A549 (cell line): ENCODE measurements at regions of chr15 and their contacts with region 1.

Region 1: DNA sequence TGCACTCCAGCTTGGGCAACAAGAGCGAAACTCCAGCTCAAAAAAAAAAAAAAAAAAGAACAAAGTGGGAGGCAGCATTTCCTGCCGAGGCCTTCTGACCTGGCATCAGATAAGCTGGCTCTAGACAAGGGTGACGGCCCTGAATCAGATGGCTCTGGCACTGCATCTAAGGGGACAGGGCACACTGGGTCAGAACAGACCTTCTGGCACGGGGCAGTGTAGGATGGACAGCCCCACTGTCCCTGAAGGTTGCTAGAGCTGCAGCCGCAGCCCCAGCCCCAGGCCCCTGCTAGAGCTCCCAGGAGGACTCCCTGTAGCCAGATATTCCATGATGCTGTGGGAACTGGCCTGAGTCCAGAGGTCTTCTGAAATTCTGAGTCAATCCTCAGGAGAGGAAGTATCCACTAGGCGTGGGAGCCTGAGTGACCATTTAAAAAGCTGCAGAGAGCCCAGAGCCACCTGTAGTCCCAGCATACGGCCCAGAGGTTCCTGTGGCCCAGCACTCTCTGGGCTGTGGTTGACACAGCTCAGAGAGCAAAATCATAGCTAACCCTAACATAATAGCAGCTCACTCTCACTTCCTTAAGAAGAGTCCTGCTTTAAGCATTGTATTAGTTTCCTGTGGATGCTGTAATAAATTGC is 69.2 kb upstream of the MFGE8 start:
- DNase-seq: peak; percentile 72 to 86
- ATAC-seq: peak; percentile 78 to 89
- H3K4me3 ChIP-seq: no peak overlapping the region
- H3K27ac ChIP-seq: peak overlapping the region; percentile 87 to 89
- H3K4me1 ChIP-seq: peaks cover 57% of the 10 kb centered on the region
- CTCF ChIP-seq: no peak
- EP300 ChIP-seq: peak in 1 of 2 experiments; percentile 28; a peak in 2 of 5 replicates
- POLR2A ChIP-seq: no peak; the same call in none of the 2 replicates
- RAD21 ChIP-seq: no peak; a peak in 2 of 5 replicates

Region 2: DNA sequence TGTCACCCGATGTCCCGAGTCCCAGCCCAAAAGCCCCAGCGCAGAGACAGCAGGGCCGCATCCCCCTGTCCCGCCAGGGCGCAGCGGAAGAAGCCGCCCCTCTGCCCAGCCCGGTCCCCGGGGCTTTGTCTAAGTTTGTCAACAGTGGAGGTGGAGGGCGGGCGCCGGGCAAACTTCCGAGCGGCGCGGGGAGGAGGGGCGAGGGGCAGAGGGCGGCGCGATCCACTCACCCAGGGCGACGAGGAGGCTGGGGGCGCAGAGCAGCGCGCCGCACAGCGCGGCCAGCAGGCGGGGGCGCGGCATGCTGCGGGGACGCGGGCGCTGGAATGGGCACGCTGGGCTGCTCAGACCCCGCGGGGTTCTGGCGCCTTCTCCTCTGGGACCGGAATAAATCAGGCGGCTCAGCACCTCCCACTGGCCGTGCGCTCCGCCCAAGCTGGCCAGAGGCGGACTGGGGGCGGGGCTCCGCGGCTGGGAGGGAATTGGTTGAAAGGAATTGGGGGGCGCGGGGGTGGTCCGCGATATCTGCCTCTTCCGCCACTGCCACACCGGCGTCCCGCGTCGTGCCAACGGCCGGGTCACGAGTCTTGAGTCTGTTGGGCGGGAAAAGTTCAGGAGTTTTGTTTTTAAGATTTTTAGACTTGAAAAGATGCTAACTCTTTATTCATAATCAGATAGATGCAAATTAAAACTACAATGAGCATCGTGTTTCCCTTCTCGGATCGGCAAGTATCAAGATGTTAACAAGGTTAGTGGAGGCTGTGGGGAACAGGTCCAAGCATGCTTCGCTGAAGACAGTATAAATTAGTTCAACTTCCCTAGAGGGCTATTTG is 69.2 kb before region 1 on chr15 and contains the start of gene MFGE8:
- CTCF ChIA-PET with region 1: interaction called, 851 read pairs
- POLR2A ChIA-PET with region 1: interaction called, 40 read pairs
- DNase-seq: peak; percentile 77 to 87
- ATAC-seq: peak; percentile 84 to 90
- H3K4me3 ChIP-seq: peak within 1 kb of the TSS; percentile 66
- H3K27ac ChIP-seq: peak within 1 kb of the TSS; percentile 73 to 89
- H3K4me1 ChIP-seq: peaks cover 26% of the 10 kb centered on the region
- CTCF ChIP-seq: no peak
- EP300 ChIP-seq: no peak
- POLR2A ChIP-seq: peak; percentile 96
- RAD21 ChIP-seq: 0 out of 5 replicates have a peak, but pooled peaks of 1 of the 2 experiments have one; percentile 20
- polyA plus RNA-seq, gene MFGE8: 206 and 213 TPM in 2 replicates

Region 3: DNA sequence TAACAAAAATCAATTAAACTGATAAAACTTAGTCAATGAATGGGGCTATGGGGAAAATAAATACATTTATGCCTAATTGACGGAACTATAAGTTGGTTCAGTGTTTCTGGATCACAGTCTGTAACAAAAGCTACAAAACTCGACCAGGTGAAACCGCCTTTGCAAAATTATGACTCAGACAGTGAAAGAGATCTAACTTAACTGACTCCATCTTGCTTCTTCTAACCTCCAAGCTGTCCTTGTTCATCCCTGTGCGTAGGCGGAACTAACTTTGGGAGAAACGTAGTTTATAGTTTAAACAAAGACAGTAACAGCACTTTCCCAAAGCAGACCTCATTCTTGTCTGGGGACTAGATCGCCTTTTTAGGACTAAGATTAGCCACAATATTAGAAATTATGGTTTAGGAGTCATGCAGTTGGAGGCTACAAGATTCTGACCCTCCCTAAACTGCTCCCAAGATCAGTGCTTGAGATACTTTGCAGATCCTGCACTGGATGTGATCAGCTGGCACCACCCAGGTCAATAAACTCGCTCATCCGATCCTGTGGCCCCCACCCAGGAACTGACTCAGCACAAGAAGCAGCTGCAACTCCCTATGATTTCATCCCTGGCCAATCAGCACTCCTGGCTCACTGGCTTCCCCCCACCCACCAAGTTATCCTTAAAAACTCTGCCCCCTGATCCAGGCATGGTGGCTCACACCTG is 62.1 kb before region 1 on chr15:
- CTCF ChIA-PET with region 1: interaction called, 851 read pairs
- POLR2A ChIA-PET with region 1: interaction called, 15 read pairs
- DNase-seq: peak in 1 of 2 experiments; percentile 70
- ATAC-seq: peak in 1 of 2 experiments; percentile 60; a peak in 3 of 6 replicates
- H3K4me3 ChIP-seq: no peak overlapping the region
- H3K27ac ChIP-seq: peak overlapping the region; percentile 55 to 78
- H3K4me1 ChIP-seq: peaks cover 34% of the 10 kb centered on the region
- CTCF ChIP-seq: no peak
- EP300 ChIP-seq: no peak
- POLR2A ChIP-seq: no peak
- RAD21 ChIP-seq: no peak

Region 4: DNA sequence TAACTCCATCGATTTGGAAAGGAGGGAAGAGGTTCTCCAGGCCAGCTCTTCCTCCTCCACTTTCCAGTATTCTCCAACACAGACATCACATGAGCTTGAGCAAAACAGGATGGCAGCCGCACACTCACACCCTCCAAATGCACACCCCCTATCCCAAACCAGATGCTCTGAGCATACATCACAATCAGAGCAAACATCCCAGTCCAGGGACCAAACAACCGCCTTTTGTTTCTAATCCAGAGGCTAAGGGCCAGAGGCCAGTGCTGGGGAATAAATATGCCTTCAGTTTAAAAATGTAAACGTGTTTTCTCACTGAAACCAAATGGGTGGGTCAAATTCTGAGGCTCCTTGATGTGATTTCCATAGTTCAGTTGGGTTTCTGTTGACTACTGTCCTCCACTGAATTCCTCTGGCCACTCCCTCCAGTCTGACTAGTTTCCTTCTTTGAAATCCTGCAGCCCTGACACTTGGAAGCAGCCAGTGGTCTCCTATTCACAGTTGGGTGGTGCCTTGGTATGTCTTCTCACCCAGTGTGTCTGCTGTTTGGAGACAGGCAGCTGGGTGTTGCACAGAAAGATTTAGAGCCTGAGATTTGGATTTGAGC is 50.1 kb before region 1 on chr15:
- CTCF ChIA-PET with region 1: no interaction called
- POLR2A ChIA-PET with region 1: no interaction called
- DNase-seq: no peak
- ATAC-seq: peak in 1 of 2 experiments; percentile 51; a peak in 2 of 6 replicates
- H3K4me3 ChIP-seq: no peak overlapping the region
- H3K27ac ChIP-seq: no peak overlapping the region
- H3K4me1 ChIP-seq: peaks cover 21% of the 10 kb centered on the region
- CTCF ChIP-seq: no peak
- EP300 ChIP-seq: no peak
- POLR2A ChIP-seq: no peak
- RAD21 ChIP-seq: no peak

Region 5: GRCh38 chr15:88995449-88995848 is 13.0 kb after region 1 on chr15:
- CTCF ChIA-PET with region 1: interaction called, 22 read pairs
- POLR2A ChIA-PET with region 1: interaction called, 29 read pairs
- DNase-seq: peak in 1 of 2 experiments; percentile 60
- ATAC-seq: peak; percentile 85
- H3K4me3 ChIP-seq: no peak overlapping the region
- H3K27ac ChIP-seq: peak overlapping the region; percentile 53 to 75
- H3K4me1 ChIP-seq: peaks cover 29% of the 10 kb centered on the region
- CTCF ChIP-seq: no peak
- EP300 ChIP-seq: no peak
- POLR2A ChIP-seq: no peak
- RAD21 ChIP-seq: no peak

Region 6: DNA sequence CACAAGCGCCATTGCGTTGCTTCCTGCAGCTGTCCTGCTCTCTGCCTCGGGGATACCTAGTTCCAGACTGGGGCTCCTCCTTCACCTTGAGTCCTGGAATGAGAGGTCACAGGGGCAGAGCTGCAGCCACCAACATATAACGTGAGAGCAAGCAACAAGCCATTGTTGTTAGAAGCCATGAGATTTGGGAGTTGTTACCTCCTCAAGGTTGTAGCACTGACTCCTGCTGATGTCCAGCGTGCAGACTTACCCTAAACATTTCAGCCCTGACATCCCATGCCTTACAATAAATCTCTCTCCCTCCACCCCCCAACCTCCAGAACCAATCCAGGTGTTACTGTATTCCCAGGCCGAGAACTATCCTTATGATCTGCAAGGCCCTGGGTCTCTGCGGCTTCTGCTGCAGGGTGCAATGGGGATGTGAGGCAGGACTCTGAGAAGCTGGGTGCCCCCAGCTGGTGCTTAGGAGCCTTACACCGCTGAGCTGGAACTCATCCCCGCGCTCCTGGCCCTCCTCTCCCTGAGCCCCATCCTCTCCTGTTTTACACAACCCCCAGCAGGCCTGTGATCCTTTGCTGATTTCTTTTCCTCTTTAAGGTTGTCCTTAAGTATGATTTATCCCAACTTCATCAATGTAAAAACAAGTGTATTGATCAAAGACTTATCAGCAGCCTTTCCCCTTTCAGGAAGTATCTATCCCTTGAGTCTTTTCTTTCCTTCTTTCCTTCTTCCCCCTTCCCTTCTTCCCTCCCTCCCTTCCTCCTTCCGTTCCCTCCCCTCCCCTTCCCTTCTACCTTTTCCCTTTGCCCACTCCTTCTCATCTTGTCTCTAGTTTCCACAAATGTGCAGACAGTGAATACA is 21.7 kb after region 1 on chr15:
- CTCF ChIA-PET with region 1: interaction called, 22 read pairs
- POLR2A ChIA-PET with region 1: interaction called, 15 read pairs
- DNase-seq: peak; percentile 78 to 79
- ATAC-seq: peak; percentile 96
- H3K4me3 ChIP-seq: no peak overlapping the region
- H3K27ac ChIP-seq: peak overlapping the region; percentile 24 to 87; a peak in 5 of 6 replicates
- H3K4me1 ChIP-seq: peaks cover 27% of the 10 kb centered on the region
- CTCF ChIP-seq: peak; percentile 62
- EP300 ChIP-seq: no peak
- POLR2A ChIP-seq: no peak
- RAD21 ChIP-seq: peak; percentile 82 to 84

Region 7: GRCh38 chr15:89034288-89034687 is 51.9 kb after region 1 on chr15:
- CTCF ChIA-PET with region 1: no interaction called
- POLR2A ChIA-PET with region 1: no interaction called
- DNase-seq: peak; percentile 54 to 62
- ATAC-seq: peak; percentile 56 to 76; a peak in 5 of 6 replicates
- H3K4me3 ChIP-seq: no peak overlapping the region
- H3K27ac ChIP-seq: no peak overlapping the region
- H3K4me1 ChIP-seq: no peaks in the 10 kb centered on the region
- CTCF ChIP-seq: peak; percentile 62
- EP300 ChIP-seq: no peak
- POLR2A ChIP-seq: no peak
- RAD21 ChIP-seq: peak; percentile 63 to 78